ENCODE measurements at regions of chr3 and their contacts with region 1.

Region 1: GRCh38 chr3:13895155-13896105 is 15.6 kb upstream of the WNT7A start:
- DNase-seq: peak; percentile 96
- H3K4me3 ChIP-seq: peak overlapping the region; percentile 47
- H3K27ac ChIP-seq: no peak overlapping the region
- H3K4me1 ChIP-seq: no peaks in the 10 kb centered on the region
- H3K27me3 ChIP-seq: no peaks in the 10 kb centered on the region
- CTCF ChIP-seq: no peak

Region 2: DNA sequence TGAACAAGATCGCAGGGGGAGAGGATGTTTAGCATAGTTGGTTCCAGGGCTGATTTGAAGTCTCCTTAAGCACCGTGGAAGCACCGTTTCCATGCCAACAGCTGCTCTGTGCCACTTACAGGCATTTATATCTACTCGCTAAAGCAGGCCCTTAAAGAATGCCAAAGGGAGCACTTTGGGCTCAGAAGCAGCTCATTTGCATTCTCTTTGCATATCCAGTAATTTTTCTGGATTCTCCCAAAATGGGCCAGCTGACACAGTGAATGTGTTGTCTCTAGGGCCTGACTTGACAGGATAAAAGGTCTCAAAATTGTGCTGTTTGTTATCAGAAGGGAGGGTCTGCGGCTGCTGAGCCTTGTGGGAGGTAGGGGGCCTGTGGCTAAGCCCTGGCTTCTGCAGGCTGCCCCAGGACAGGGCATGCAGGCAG is 207.9 kb before region 1 on chr3:
- intact Hi-C with region 1: no loop called
- DNase-seq: no peak
- H3K4me3 ChIP-seq: no peak overlapping the region
- H3K27ac ChIP-seq: no peak overlapping the region
- H3K4me1 ChIP-seq: no peaks in the 10 kb centered on the region
- H3K27me3 ChIP-seq: no peaks in the 10 kb centered on the region
- CTCF ChIP-seq: no peak

Region 3: DNA sequence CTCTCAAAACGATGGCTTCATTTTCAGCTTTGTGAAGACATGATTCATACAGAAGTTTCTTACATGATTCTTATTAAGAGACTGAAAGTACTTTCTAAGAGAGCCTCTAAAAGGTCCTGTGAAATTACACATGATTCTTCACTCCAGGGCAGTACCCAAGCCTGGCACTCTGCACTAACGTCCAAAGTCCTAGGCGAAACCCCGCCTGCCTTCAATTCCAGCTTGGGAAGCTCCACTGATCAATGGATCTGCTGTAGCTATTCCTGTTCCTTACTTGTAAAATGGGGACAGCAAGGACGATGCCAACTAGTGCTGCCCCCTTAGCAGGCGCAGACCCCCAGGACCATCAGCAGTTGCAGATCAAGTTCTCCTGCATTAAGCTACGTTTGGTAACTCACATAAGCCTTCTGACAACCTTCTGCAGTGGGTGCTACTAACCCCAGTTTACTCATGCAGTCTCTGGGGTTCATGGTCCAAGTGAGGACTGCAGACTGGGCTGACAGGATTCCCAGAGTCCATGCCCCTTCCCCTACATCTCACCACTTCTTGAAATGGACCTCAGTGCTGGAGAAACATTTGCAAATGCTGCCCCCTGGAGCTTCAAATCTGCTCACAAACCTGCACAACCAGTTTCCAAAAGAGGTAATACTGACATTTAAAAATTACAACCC is 218.7 kb after region 1 on chr3:
- intact Hi-C with region 1: loop called (anchors 5 kb)
- DNase-seq: peak; percentile 13
- H3K4me3 ChIP-seq: no peak overlapping the region
- H3K27ac ChIP-seq: no peak overlapping the region
- H3K4me1 ChIP-seq: no peaks in the 10 kb centered on the region
- H3K27me3 ChIP-seq: no peaks in the 10 kb centered on the region
- CTCF ChIP-seq: no peak

Region 4: DNA sequence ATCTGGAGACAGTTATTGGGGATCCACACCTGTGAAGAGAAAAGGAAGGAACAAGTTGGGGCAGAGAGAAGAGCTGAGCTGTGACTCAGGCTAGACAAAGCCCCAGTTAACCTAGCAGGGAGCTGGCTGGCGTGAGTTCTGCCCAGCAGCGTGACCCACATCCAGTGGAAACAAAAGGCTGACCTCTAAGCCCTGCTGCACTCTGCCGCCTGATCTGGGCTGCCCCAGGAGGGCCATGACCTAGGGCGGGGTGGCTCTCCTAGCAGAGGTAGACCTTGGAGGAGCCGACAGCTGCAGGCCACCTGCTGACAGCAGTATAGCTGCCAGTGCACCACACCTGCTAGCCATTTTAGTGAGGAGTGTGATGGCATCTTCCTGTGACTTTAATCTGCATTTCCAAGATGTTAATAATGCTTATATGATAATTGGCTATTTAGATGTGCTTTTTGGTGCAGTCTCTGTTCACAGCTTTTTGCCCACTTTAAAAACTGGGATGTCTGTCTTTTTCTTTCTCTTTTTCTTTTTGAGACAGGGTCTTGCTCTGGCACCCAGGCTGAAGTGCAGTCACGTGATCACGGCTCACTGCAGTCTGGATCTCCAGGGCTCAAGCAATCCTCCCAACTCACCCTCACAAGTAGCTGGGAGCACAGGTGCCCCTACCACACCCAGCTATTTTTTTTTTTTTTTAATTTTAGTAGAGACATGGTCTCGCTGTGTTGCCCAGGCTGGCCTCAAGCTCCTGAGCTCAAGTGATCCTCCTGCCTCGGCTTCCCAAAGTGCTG is 361.3 kb after region 1 on chr3:
- intact Hi-C with region 1: loop called (anchors 10 kb)
- DNase-seq: peak; percentile 39
- H3K4me3 ChIP-seq: no peak overlapping the region
- H3K27ac ChIP-seq: no peak overlapping the region
- H3K4me1 ChIP-seq: no peaks in the 10 kb centered on the region
- H3K27me3 ChIP-seq: no peaks in the 10 kb centered on the region
- CTCF ChIP-seq: no peak

Region 5: DNA sequence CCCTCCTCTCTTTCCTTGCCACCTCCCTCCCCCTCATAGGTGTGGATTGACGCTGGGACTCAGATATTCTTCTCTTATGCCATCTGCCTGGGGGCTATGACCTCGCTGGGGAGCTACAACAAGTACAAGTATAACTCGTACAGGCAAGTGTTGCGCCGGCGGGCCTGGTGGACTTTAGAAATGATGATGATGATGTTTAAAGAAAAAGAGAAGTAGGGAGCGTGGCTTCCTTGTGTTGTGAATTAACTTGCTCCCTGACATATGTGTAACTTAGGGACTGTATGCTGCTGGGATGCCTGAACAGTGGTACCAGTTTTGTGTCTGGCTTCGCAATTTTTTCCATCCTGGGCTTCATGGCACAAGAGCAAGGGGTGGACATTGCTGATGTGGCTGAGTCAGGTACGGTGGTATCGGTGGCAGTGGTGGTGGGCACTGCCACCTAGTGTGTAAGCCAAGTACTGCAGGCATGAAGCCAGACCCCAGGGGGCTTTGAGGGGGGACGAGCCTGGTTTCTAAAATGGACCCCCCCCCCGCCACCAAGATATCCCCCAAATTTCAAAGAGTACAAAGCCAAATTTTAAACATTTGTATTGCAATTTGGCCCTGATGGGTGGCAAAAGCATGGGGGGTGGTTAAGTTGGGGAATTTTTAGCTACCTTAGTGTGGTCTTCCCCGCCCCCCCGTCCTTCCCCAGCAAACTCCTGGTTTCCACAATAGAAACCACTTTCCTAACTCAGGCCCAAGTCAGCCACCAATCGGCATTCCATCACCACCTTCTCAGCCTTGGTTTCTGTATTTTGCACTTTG is 572.6 kb after region 1 on chr3:
- intact Hi-C with region 1: loop called (anchors 5 kb)
- DNase-seq: peak; percentile 47
- H3K4me3 ChIP-seq: no peak overlapping the region
- H3K27ac ChIP-seq: no peak overlapping the region
- H3K4me1 ChIP-seq: no peaks in the 10 kb centered on the region
- H3K27me3 ChIP-seq: no peaks in the 10 kb centered on the region
- CTCF ChIP-seq: peak; percentile 90

Measured in colonic mucosa (tissue), 4 donors.